Right ventricle myocardium superior (tissue), 1 donor: ENCODE measurements at regions of chr1 and their contacts with region 1.

Region 1: GRCh38 chr1:219805193-219805592 is 123.2 kb downstream of the SLC30A10 start:
- DNase-seq: no peak
- ATAC-seq: no peak

Region 2: DNA sequence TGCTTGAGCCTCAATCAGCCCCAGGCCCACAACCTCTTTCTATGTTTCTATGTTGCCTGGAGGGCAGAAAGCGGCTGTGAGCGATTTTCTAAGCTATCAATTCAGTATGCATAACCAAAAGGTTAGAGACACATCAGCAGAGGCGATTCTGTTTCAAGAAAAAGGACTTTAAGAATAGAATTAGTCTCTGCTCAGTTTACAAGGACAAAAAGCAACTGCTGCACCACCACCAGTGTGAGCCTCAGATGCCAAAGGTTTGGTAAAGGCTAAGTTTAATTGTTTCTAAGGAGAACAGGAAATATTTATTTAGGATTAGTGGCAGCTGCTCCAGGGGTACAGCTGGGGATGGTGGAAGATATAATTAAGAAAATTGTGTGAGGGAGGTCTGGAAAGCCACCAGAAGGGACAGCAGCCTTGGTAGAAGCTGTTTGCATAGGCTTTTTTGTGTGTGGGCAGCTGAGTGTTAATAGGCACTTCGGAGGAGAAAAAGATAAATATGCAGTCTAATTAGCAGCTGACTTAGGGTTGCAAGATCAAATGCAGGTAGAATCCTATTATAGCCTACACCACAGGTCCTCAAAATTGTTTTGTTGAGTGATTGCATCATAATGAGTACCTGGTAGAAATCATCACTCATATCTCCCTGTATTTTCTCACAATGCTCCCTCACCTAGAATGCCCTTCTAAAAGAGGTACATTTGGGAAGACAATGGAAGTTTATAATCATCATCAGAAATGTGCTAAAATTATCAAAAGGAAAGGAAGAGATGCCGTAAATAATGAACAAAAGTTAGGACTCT is 228.1 kb before region 1 on chr1:
- intact Hi-C with region 1: loop called (anchors 10 kb)
- DNase-seq: no peak
- ATAC-seq: no peak

Region 3: DNA sequence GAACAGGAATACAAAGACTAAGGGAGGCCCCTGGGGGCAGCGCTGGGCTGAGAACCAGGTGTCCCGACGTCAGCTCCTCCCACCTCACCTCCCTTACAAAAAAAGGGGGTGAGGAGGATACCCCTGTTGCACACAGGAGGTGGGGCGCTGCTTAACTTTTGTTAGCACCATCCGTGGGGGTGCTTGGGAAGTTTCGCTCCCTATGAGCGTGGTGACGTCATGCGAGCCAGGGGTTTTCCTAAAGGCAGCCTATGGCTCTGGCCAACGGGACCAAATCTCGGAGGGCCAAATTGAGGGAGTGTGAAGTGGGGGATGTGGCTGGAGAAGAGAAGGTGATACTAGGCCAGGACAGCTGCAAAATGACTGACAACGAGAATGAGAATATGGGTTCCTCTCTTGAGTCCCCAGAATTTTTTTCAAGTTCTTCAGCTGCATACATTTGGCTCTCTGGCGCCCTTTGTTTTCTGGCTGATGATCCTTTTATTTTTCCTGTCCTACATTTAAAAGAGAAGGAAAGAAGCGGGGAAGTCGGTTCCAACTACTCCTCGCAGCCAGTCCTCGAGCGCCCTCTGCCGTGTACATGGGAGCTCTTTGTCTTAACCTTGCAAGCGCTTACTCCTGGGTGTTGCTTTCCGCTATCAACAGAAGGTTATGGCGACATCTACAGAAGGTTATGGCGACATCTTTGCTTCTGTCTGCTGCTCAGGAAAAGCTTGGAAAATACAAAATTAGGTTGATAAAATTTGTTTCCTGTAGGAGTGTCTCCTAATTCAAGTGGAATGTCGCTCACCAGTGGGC is 144.3 kb before region 1 on chr1:
- intact Hi-C with region 1: loop called (anchors 10 kb)
- DNase-seq: peak; percentile 92
- ATAC-seq: peak; percentile 91